Esophagus squamous epithelium (tissue), 5 donors: ENCODE measurements at regions of chr20 and their contacts with region 1.

Region 1: GRCh38 chr20:57425150-57426013 is 34.2 kb downstream of the RBM38 start:
- DNase-seq: no peak
- H3K4me3 ChIP-seq: no peak overlapping the region
- H3K27ac ChIP-seq: no peak overlapping the region
- H3K4me1 ChIP-seq: no peaks in the 10 kb centered on the region
- H3K27me3 ChIP-seq: peaks cover 0 to 10% (median 0%) of the 10 kb centered on the region in 4 donors
- CTCF ChIP-seq: no peak
- POLR2A ChIP-seq: no peak

Region 2: GRCh38 chr20:57142667-57143066 is 282.7 kb before region 1 on chr20:
- intact Hi-C with region 1: no loop called
- DNase-seq: no peak
- H3K4me3 ChIP-seq: no peak overlapping the region
- H3K27ac ChIP-seq: no peak overlapping the region
- H3K4me1 ChIP-seq: no peaks in the 10 kb centered on the region
- H3K27me3 ChIP-seq: peaks cover 0 to 39% (median 0%) of the 10 kb centered on the region in 4 donors
- CTCF ChIP-seq: no peak
- POLR2A ChIP-seq: no peak

Region 3: GRCh38 chr20:58818585-58819285 is 1393.4 kb after region 1 on chr20:
- intact Hi-C with region 1: loop called (anchors 10 kb)
- DNase-seq: no peak
- H3K4me3 ChIP-seq: no peak overlapping the region
- H3K27ac ChIP-seq: no peak overlapping the region
- H3K4me1 ChIP-seq: no peaks in the 10 kb centered on the region
- H3K27me3 ChIP-seq: peaks cover 0 to 14% (median 0%) of the 10 kb centered on the region in 4 donors
- CTCF ChIP-seq: no peak
- POLR2A ChIP-seq: no peak